AG04449 (cell line): ENCODE measurements at regions of chr2 and their contacts with region 1.

Region 1: GRCh38 chr2:218245214-218245613 is 15.6 kb upstream of the GPBAR1 start:
- DNase-seq: no peak
- H3K4me3 ChIP-seq: no peak overlapping the region
- CTCF ChIP-seq: no peak

Region 2: GRCh38 chr2:218229239-218229638 is 16.0 kb before region 1 on chr2:
- CTCF ChIA-PET with region 1: interaction called, 22 read pairs
- POLR2A ChIA-PET with region 1: no interaction called
- DNase-seq: peak; percentile 74
- H3K4me3 ChIP-seq: no peak overlapping the region
- CTCF ChIP-seq: no peak

Region 3: DNA sequence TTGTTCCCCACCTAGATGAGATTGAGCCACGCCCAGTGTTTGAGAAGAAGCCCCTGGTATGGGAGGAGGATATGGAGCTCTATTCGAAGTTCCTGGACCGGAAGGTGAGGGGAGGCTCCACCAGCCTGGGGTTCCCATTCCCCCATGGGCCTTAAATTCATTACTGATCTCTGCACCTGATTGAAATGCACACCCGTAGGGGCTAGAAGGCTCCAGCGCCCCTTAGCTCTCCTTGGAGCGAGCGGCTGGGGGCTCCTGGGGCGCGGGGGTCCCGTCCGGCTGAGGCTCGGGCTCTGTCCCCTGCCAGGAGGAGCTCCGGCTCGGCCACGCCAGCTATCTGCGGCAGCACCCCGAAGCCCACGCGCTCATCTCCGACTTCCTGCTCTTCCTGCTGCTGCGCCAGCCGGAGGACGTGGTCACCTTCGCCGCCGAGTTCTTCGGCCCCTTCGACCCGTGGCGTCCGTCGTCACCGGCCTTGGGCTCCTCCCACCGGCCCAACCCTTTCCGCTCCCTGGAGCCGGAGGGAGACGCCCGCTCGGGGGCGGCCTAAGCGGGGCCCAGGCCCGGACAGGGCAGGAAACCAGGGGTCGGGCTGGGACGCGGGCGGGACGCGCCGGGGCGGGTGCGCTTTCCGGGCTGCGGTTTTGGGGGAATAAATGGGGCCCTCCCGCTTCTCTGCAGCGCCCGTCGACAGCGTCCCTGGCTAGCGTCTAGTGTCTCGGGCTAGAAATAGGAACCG is 122.4 kb after region 1 on chr2:
- CTCF ChIA-PET with region 1: no interaction called
- POLR2A ChIA-PET with region 1: no interaction called
- DNase-seq: no peak
- H3K4me3 ChIP-seq: peak overlapping the region; percentile 59
- CTCF ChIP-seq: no peak